HepG2 (cell line): ENCODE measurements at regions of chr15 and their contacts with region 1.

Region 1: DNA sequence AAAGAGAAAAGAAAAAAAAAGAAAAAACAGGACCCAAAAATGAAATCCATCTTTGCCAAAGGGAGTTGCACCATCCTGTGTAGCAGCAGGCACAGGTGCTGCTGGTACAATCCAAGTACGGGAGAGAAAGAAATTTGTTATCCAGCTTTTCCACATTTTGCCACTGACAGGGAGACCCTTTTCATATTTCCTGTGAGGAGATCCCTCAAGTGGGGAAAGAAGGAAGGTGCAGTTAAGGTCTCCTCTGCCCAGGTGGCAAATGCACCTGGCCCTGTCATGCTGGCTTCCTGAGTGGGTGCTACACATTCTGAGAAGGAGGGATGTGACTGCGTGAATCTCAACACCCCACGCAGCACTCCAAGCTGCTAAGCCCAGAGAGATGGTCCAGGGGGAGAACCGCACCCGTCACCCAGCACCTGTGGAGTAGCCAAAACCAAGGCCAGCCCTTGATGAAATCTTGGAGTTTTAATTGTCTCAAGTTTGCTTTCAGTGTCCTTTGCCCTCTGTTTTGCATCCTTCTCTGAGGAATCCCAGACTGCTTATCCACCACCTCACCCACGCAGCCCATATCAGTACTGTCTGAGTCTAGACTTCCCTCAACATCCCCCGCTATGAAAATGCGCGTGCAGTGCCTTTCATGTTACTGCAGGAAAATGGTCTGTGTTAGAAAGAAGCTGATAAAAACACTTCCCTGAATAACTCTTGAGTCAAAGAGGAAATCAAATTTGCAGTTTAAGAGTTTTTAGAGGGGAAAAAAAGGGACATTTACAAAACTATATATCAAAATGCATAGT is 141.9 kb upstream of the THBS1 start:
- DNase-seq: peak; percentile 34
- ATAC-seq: peak; percentile 50; the same call in 2 of the 3 replicates
- H3K4me3 ChIP-seq: no peak overlapping the region
- H3K27ac ChIP-seq: no peak overlapping the region
- H3K4me1 ChIP-seq: peaks cover 40% of the 10 kb centered on the region
- H3K27me3 ChIP-seq: no peaks in the 10 kb centered on the region
- CTCF ChIP-seq: peak; percentile 40
- EP300 ChIP-seq: no peak
- POLR2A ChIP-seq: no peak
- RAD21 ChIP-seq: no peak

Region 2: GRCh38 chr15:39213385-39213840 is 225.6 kb before region 1 on chr15:
- CTCF ChIA-PET with region 1: no interaction called
- POLR2A ChIA-PET with region 1: no interaction called
- in situ Hi-C with region 1: no loop called
- intact Hi-C with region 1: loop called (anchors 5 kb)
- DNase-seq: peak; percentile 94
- ATAC-seq: peak; percentile 95
- H3K4me3 ChIP-seq: no peak overlapping the region
- H3K27ac ChIP-seq: peak overlapping the region; percentile 55
- H3K4me1 ChIP-seq: peaks cover 58% of the 10 kb centered on the region
- H3K27me3 ChIP-seq: no peaks in the 10 kb centered on the region
- CTCF ChIP-seq: no peak
- EP300 ChIP-seq: peak in 1 of 2 experiments; percentile 33; a peak in 1 of 4 replicates
- POLR2A ChIP-seq: no peak
- RAD21 ChIP-seq: no peak

Region 3: DNA sequence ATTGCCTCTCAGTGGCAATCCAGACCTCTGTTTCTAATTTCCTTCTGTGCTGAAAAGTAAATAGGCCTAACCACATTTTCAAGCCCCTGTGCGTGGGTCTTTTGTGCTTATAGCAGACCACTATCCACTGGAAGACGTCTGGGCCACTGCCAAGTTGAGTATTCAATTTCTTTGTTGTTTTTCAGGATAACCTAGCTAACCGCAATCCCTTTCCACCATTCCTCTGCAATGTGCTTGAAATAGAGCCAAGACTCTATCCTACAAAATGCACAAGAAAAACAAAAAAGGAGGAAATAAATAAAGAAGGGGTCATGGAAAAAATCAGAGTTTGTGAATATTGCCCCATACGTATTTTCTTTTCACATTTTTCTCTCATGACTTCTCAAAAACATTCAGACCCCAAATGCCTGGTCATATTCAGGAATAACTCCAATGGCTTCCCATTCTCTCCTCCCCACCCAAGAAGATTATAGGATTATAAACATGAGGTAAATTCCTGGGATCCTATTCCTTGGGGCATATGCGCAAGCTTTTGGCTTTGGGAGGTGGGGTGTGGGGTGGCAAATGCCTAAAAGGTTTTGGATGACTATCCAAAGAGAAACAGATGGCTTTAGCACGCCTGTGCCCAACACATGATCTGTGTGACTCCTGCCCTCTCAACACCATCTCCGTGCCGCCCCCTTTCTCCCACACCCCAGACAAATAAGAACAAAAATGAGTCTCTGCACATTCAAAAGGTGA is 76.0 kb before region 1 on chr15:
- CTCF ChIA-PET with region 1: no interaction called
- POLR2A ChIA-PET with region 1: no interaction called
- in situ Hi-C with region 1: no loop called
- intact Hi-C with region 1: loop called (anchors 5 kb)
- DNase-seq: no peak
- ATAC-seq: no peak
- H3K4me3 ChIP-seq: no peak overlapping the region
- H3K27ac ChIP-seq: peak overlapping the region; percentile 18
- H3K4me1 ChIP-seq: peaks cover 68% of the 10 kb centered on the region
- H3K27me3 ChIP-seq: no peaks in the 10 kb centered on the region
- CTCF ChIP-seq: no peak
- EP300 ChIP-seq: no peak
- POLR2A ChIP-seq: no peak
- RAD21 ChIP-seq: no peak

Region 4: DNA sequence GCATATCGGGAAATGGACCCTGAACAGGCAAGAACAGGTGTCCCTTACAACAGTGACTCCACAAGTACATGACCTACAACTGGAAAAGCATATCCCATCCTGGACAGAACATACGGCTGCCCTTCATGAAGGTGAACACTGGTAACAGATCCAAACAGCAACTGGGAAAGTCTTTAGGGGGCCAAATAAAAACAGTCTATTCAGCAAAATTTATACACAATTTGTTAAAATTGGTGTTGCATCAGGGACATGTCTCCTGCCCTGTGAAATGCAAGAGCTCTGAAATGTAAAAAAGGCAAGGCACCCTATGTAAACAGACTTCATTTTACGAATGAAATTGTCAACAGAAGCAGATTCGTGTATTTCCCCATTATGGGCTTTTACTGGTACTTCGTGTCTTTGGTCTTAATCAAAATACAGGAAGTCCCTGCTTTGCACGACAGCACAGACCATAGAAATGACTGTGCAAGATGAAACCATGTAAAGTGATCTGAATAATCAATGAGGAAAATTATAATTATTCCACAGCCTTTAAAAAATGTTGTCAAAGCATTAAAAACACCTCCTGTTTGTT is 14.6 kb after region 1 on chr15:
- CTCF ChIA-PET with region 1: no interaction called
- POLR2A ChIA-PET with region 1: no interaction called
- in situ Hi-C with region 1: no loop called
- intact Hi-C with region 1: loop called (anchors 1 kb)
- DNase-seq: no peak
- ATAC-seq: no peak
- H3K4me3 ChIP-seq: no peak overlapping the region
- H3K27ac ChIP-seq: no peak overlapping the region
- H3K4me1 ChIP-seq: peaks cover 52% of the 10 kb centered on the region
- H3K27me3 ChIP-seq: no peaks in the 10 kb centered on the region
- CTCF ChIP-seq: no peak
- EP300 ChIP-seq: no peak
- POLR2A ChIP-seq: no peak
- RAD21 ChIP-seq: no peak